OCI-LY7 (cell line): ENCODE measurements at regions of chr2 and their contacts with region 1.

Region 1: DNA sequence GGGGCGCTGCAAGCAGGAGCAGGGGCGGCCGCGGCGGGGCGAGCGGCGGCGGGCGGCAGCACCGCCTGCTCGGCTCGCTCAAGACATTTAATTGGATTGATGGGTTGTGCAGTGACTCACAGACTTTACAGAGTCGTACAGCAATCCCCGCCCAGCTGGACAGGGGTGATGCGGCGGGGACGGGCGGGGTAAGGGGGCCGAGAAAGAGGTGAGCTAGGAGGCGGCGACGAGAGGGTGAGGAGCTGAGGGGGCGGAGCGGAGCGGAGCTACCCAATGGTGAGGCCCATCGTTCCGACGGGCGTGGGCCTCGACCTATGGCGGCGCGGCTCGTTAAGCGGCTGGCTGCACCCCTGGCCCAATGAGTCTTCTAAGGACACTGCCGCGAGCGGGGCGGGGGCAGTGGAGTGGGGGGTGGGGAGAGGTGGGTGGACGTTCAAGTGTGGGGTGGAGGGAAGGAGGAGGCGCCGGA is 97.1 kb upstream of the SERTAD2 start:
- DNase-seq: peak; percentile 99
- H3K4me3 ChIP-seq: peak overlapping the region; percentile 85
- H3K27ac ChIP-seq: peak overlapping the region; percentile 92
- H3K4me1 ChIP-seq: peaks cover 44% of the 10 kb centered on the region
- CTCF ChIP-seq: 0 out of 2 replicates have a peak, but pooled peaks have one; percentile 14

Region 2: GRCh38 chr2:64144057-64145013 is 606.5 kb before region 1 on chr2 and contains the start of gene PELI1:
- CTCF ChIA-PET with region 1: no interaction called
- POLR2A ChIA-PET with region 1: no interaction called
- intact Hi-C with region 1: loop called (anchors 5 kb)
- DNase-seq: peak; percentile 99
- H3K4me3 ChIP-seq: peak within 1 kb of the TSS; percentile 97
- H3K27ac ChIP-seq: peak within 1 kb of the TSS; percentile 80
- H3K4me1 ChIP-seq: peaks cover 41% of the 10 kb centered on the region
- CTCF ChIP-seq: peak; percentile 68; the same call in 1 of the 2 replicates
- total RNA-seq, gene PELI1: 108 and 110 TPM in 2 replicates

Region 3: DNA sequence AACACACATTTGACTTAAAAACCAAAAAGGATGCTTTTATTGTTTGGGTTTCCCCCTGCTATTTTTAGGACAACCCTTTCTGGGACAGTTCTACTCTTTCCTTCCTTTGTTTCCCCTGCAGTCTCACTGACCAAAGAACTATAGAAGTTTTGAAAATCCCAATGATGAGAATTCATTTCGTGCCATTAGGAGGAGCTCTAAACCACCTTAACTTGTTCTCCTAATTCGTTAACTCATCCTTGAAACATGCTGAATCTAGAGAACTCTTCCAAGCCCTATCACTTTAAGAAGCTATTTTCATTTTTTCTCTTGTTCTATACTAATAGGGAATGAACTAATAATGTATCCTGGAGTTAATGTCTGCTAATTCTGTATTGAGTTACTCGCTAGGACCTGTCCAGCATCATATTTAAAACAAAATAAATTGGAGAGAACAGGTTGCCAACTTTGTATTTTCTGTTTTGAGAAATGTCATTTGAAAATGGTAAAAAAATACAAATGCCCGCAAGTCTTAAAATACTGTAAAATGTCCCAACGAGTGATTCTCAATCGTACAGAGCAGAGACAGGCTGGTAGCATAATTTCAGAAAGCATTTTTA is 163.9 kb before region 1 on chr2:
- CTCF ChIA-PET with region 1: no interaction called
- POLR2A ChIA-PET with region 1: interaction called, 5 read pairs
- intact Hi-C with region 1: loop called (anchors 5 kb)
- DNase-seq: peak; percentile 65
- H3K4me3 ChIP-seq: no peak overlapping the region
- H3K27ac ChIP-seq: no peak overlapping the region
- H3K4me1 ChIP-seq: peaks cover 16% of the 10 kb centered on the region
- CTCF ChIP-seq: peak; percentile 93

Region 4: DNA sequence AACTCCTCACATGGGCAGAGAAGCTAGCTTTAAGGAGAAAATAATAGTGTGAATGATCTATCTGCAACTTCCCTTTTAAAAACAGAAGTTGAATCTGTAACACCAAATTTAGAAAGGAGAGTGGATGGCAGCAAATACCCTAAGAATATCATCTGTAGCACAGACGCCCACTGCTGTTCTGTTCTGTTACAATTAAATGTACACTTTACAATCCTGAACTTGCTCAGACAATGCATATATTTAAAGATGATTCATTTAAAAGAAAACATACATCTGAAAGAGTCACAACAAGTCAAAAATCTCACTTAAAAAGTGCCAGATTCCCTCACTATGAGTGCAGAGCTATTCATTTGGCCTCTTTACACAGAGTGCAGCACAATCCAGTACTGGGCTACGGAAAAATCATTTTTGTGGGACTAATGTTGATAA is 89.1 kb before region 1 on chr2:
- CTCF ChIA-PET with region 1: interaction called, 14 read pairs
- POLR2A ChIA-PET with region 1: interaction called, 324 read pairs
- intact Hi-C with region 1: loop called (anchors 1 kb)
- DNase-seq: peak; percentile 74
- H3K4me3 ChIP-seq: peak overlapping the region; percentile 51
- H3K27ac ChIP-seq: peak overlapping the region; percentile 95
- H3K4me1 ChIP-seq: peaks cover 100% of the 10 kb centered on the region
- CTCF ChIP-seq: peak; percentile 75

Region 5: GRCh38 chr2:64711252-64711800 is 39.5 kb before region 1 on chr2:
- CTCF ChIA-PET with region 1: no interaction called
- POLR2A ChIA-PET with region 1: interaction called, 11 read pairs
- intact Hi-C with region 1: no loop called
- DNase-seq: no peak
- H3K4me3 ChIP-seq: no peak overlapping the region
- H3K27ac ChIP-seq: no peak overlapping the region
- H3K4me1 ChIP-seq: peaks cover 6% of the 10 kb centered on the region
- CTCF ChIP-seq: no peak

Region 6: DNA sequence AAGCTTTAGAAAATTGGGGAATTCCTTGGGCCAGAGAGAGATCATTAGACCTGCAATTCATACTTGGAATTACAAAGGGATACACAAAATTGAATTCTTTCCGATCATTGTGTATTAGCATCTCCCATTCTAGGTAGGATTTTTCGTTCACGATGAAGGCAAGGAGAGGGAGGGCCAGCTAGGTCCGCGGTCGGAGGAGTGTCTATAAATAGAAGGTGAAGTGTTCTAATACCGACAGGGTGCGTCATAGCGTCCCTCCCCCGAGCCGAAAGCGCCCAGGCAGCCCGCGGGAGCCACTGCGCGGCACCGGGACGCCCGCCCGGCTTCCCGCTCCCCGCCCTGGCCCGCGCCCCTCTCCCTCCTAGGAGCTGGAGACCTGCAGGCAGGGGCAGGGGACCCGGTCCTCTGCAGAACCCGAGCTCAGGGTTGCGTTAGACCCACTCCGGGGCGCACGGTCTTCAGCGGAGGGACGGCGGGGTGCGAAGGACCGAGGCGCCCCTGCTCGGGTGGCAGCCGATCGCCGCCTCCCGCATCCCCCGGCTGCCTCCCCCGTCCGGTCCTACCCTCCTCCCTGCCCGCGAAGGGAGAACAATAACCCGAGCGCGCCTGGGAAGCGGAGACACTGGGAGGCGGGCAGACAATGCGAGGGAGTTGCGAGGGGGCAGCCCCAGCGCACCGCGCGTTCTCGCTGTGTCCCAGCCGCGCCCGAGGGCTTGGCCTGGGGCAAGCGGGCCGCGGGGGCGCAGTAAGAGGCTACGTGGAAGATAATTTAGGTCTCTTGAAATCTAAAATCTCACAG is 17.0 kb after region 1 on chr2:
- CTCF ChIA-PET with region 1: interaction called, 7 read pairs
- POLR2A ChIA-PET with region 1: interaction called, 21 read pairs
- intact Hi-C with region 1: loop called (anchors 1 kb)
- DNase-seq: peak; percentile 78
- H3K4me3 ChIP-seq: peak overlapping the region; percentile 69
- H3K27ac ChIP-seq: peak overlapping the region; percentile 16
- H3K4me1 ChIP-seq: peaks cover 34% of the 10 kb centered on the region
- CTCF ChIP-seq: peak; percentile 40; the same call in 1 of the 2 replicates

Region 7: DNA sequence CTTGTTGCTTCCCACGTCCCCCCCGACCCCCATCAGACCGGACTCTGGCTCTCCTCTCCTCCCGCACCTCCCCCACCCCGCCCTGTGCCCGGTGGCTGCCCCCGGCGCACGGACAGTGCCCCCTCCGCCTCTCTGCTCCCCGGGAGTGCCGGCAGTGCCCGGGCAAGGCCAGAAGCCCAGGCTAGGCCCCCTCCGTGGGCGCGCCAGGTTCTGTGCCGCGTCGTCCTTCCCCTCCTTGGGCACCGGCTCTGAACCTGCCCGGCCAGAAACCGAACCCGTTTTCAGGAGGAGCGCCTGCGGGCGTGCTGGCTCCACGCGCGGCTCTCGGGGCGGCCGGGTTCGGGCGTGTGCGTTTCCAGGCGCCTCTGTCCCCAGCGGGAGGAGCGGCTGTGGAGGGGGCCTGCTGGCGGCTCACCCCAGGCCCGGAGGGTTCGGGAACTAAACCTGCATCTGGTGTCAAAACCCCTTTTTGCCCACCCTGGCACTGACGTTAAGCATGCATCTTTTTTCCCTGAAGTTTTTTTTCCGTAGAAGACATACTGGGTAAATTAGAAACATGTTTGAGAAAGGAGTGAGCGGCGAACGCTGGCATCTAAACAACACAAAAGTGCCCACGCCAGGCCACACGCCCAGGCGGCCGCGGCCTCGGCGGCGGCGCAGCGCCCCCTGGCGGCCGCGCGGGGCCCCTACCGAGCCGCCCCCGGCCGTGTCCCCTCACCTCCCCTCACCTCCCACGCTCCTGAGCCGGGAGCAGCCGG is 114.4 kb after region 1 on chr2:
- CTCF ChIA-PET with region 1: no interaction called
- POLR2A ChIA-PET with region 1: interaction called, 3 read pairs
- intact Hi-C with region 1: loop called (anchors 2 kb)
- DNase-seq: peak; percentile 76
- H3K4me3 ChIP-seq: peak overlapping the region; percentile 69
- H3K27ac ChIP-seq: peak overlapping the region; percentile 20
- H3K4me1 ChIP-seq: peaks cover 54% of the 10 kb centered on the region
- CTCF ChIP-seq: peak; percentile 75

Region 8: GRCh38 chr2:65045651-65046050 is 294.8 kb after region 1 on chr2:
- CTCF ChIA-PET with region 1: no interaction called
- POLR2A ChIA-PET with region 1: no interaction called
- intact Hi-C with region 1: no loop called
- DNase-seq: no peak
- H3K4me3 ChIP-seq: no peak overlapping the region
- H3K27ac ChIP-seq: no peak overlapping the region
- H3K4me1 ChIP-seq: peaks cover 4% of the 10 kb centered on the region
- CTCF ChIP-seq: no peak